ENCODE measurements at regions of chr3 and their contacts with region 1.

Region 1: DNA sequence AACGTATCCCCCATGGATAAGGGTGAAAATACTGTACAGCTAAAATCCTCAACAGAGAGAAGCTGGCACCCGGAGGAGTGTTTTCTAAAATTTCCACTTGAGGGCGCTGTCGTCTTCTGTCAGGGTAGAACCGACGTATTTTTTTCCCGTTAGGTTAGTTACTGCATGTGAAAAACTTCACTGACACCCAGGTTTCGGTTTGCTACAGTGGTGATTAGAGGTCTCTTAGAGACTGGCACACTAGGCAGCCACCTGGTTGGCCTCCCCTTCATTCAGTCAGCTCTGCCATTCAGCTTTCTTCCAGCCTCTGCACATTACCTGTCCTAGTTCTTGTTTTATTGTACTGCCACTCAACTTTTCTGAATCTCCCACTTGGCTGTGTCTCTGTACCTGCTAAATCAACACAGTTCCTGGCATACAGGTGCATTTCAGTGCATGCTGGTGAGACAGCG is 18.4 kb downstream of the CCK start:
- DNase-seq: peak; percentile 34 to 82 (median 69)
- ATAC-seq: peak; percentile 83
- H3K4me3 ChIP-seq: no peak overlapping the region
- H3K4me3 Mint-ChIP-seq: peak overlapping the region; percentile 24
- H3K27ac ChIP-seq: no peak overlapping the region
- H3K27ac Mint-ChIP-seq: no peak overlapping the region
- H3K4me1 ChIP-seq: peaks cover 3% of the 10 kb centered on the region
- H3K4me1 Mint-ChIP-seq: peaks cover 7% of the 10 kb centered on the region
- H3K27me3 ChIP-seq: no peaks in the 10 kb centered on the region
- H3K27me3 Mint-ChIP-seq: no peaks in the 10 kb centered on the region
- CTCF ChIP-seq: peak; percentile 80

Region 2: DNA sequence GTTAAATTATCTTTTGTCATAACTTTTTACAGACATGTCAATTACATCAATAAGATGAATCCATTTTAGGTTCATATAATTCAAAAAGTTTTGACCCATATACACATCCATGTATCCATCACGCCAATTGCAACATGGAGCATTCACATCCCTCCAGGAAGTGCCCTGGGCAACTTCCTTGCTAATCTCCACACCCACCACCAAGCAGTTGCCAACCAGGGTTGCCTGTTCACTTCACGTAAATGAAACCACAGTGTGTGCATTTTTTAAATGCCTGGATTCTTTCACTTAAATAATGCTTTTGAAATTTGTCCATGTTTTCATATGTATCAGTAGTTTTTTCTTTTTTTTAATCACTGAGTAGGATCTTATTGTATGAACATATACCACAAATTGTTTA is 203.5 kb after region 1 on chr3:
- CTCF ChIA-PET with region 1: interaction called, 10 read pairs
- POLR2A ChIA-PET with region 1: no interaction called
- intact Hi-C with region 1: no loop called
- DNase-seq: no peak
- ATAC-seq: no peak
- H3K4me3 ChIP-seq: no peak overlapping the region
- H3K4me3 Mint-ChIP-seq: no peak overlapping the region
- H3K27ac ChIP-seq: no peak overlapping the region
- H3K27ac Mint-ChIP-seq: no peak overlapping the region
- H3K4me1 ChIP-seq: no peaks in the 10 kb centered on the region
- H3K4me1 Mint-ChIP-seq: no peaks in the 10 kb centered on the region
- H3K27me3 ChIP-seq: no peaks in the 10 kb centered on the region
- H3K27me3 Mint-ChIP-seq: peaks cover 4% of the 10 kb centered on the region
- CTCF ChIP-seq: no peak

Region 3: DNA sequence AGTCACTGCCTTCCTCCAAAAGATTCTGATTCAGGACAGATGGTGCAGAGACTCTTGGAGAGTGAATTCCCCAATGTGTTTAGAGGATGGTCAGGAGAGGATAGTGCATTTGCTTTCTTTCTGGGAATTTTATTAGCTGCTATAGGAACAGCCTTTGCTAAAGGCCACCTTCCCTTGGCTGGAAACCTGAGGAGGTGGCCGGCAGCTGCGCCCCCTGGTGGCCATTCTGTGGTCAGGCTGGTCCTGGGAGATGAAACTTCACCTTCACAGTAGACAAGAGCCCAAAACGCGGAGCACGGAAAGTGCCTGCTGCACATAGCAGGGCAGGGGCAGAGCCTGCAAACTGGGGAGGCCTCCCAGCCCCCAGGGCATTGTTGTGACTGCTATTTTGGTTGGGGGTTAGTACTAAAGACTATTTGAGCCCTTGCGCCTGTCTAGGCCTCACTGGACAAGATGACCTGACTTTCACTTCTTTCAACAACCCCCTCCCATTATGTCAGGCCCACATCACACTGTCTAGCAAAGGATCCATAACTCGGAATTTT is 299.9 kb after region 1 on chr3:
- CTCF ChIA-PET with region 1: interaction called, 10 read pairs
- POLR2A ChIA-PET with region 1: no interaction called
- intact Hi-C with region 1: loop called in 1 of 2 experiments (anchors 2 kb)
- DNase-seq: peak; percentile 32 to 84 (median 70)
- ATAC-seq: peak; percentile 80
- H3K4me3 ChIP-seq: no peak overlapping the region
- H3K4me3 Mint-ChIP-seq: no peak overlapping the region
- H3K27ac ChIP-seq: no peak overlapping the region
- H3K27ac Mint-ChIP-seq: no peak overlapping the region
- H3K4me1 ChIP-seq: no peaks in the 10 kb centered on the region
- H3K4me1 Mint-ChIP-seq: peaks cover 4% of the 10 kb centered on the region
- H3K27me3 ChIP-seq: no peaks in the 10 kb centered on the region
- H3K27me3 Mint-ChIP-seq: no peaks in the 10 kb centered on the region
- CTCF ChIP-seq: peak; percentile 90

Region 4: DNA sequence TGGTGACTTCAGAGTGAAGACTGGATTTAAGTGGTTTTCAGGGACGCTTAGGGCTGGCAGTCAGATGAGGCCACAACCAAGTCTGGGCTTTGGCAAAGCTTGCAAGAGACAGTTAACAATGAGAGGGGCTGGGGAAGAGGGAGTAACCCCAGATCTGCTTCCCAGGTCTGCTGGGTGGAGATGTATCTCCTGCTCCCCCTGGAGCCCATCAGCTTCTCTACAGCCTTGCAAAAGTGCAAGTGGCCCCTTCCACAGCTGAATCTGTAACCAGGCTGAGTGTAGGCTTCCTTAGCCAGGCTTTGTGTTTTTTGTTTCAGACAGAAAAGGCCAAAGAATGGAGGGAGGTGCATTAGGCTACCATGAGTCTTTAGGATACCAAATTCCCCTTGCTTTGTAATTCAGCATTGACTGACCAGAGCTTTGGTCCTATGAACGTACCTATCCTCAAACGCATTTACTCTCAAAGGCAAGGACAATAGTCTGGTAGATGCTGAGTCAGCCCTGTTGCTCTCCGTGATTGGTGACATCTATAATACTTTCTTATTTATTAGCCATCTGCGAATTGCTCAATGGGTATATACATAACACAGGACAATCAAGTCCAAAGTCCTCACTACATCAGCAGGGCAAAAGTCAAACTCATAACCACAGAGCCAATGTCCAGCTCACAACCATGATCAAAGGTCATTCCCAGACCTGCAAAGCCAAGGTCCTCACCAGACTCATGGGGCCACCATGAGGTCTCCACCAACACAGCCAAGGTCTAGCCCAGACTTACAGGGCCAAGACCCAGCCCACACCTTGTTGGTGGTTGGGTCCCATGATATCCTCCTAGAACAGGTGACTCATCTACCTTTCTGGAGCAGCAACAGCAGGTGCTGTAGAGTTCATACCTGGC is 508.3 kb after region 1 on chr3:
- CTCF ChIA-PET with region 1: no interaction called
- POLR2A ChIA-PET with region 1: no interaction called
- intact Hi-C with region 1: loop called in 1 of 2 experiments (anchors 5 kb)
- DNase-seq: peak in 1 of 9 experiments; percentile 35
- ATAC-seq: no peak
- H3K4me3 ChIP-seq: no peak overlapping the region
- H3K4me3 Mint-ChIP-seq: no peak overlapping the region
- H3K27ac ChIP-seq: no peak overlapping the region
- H3K27ac Mint-ChIP-seq: no peak overlapping the region
- H3K4me1 ChIP-seq: no peaks in the 10 kb centered on the region
- H3K4me1 Mint-ChIP-seq: no peaks in the 10 kb centered on the region
- H3K27me3 ChIP-seq: no peaks in the 10 kb centered on the region
- H3K27me3 Mint-ChIP-seq: peaks cover 3% of the 10 kb centered on the region
- CTCF ChIP-seq: no peak

Measured in CD8-positive, alpha-beta T cell (primary cell).